ENCODE measurements at regions of chr6 and their contacts with region 1.

Region 1: GRCh38 chr6:108113557-108114519 is 39.3 kb upstream of the OSTM1 start:
- DNase-seq: peak in 1 of 2 donors; percentile 55
- ATAC-seq: no peak
- H3K4me3 ChIP-seq: no peak overlapping the region
- H3K4me3 Mint-ChIP-seq: peak overlapping the region; percentile 42
- H3K27ac ChIP-seq: no peak overlapping the region
- H3K27ac Mint-ChIP-seq: no peak overlapping the region
- H3K4me1 ChIP-seq: peaks cover 42% of the 10 kb centered on the region
- H3K4me1 Mint-ChIP-seq: peaks cover 39 to 44% of the 10 kb centered on the region in 2 donors
- H3K27me3 ChIP-seq: peaks cover 41% of the 10 kb centered on the region
- H3K27me3 Mint-ChIP-seq: peaks cover 67 to 77% of the 10 kb centered on the region in 2 donors
- CTCF ChIP-seq: peak; percentile 43

Region 2: DNA sequence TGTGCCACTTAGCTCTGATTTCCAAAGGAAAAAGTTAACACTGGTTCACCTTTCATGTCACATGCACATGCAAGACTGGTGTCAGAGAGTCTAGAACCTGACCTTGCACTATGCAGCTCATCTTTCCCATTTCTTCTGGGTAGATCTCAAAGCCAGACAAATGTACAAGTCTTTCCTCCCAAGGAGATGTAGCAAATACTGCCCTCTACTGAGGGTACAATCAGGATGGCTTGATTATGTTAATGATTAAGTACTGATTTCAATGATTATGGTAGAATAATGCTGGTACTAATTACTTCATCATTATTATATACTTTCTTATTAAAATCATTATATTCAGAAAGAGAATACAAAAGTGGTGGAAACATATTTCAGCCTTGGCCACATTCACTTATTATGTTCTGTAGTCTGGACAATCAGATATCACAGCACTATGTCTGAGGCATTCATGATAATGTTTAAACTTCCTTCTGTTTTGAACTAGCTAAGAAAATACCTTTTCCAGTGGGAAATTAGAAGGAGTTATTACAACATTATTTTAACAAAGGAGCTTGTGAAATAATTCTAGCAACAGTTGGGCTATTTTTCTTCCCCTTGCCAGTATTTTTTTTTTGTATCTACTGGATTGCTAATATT is 378.4 kb after region 1 on chr6:
- intact Hi-C with region 1: loop called (anchors 10 kb)
- DNase-seq: peak in 1 of 2 donors; percentile 52
- ATAC-seq: no peak
- H3K4me3 ChIP-seq: no peak overlapping the region
- H3K4me3 Mint-ChIP-seq: no peak overlapping the region
- H3K27ac ChIP-seq: no peak overlapping the region
- H3K27ac Mint-ChIP-seq: no peak overlapping the region
- H3K4me1 ChIP-seq: no peaks in the 10 kb centered on the region
- H3K4me1 Mint-ChIP-seq: no peaks in the 10 kb centered on the region
- H3K27me3 ChIP-seq: no peaks in the 10 kb centered on the region
- H3K27me3 Mint-ChIP-seq: peaks cover 0 to 2% of the 10 kb centered on the region in 2 donors
- CTCF ChIP-seq: peak; percentile 35